Naive thymus-derived CD4-positive, alpha-beta T cell (primary cell): ENCODE measurements at regions of chr22 and their contacts with region 1.

Region 1: GRCh38 chr22:39236321-39237317 is 8.2 kb downstream of the PDGFB start:
- DNase-seq: peak in 7 of 9 donors; percentile 27 to 55 (median 49)
- ATAC-seq: peak; percentile 52
- H3K4me3 ChIP-seq: peak overlapping the region; percentile 14
- H3K4me3 Mint-ChIP-seq: peak overlapping the region; percentile 67 to 84 (median 79)
- H3K27ac ChIP-seq: no peak overlapping the region
- H3K27ac Mint-ChIP-seq: peak overlapping the region in 6 of 9 donors; percentile 31 to 89 (median 65)
- H3K4me1 ChIP-seq: peaks cover 54 to 66% of the 10 kb centered on the region in 2 donors
- H3K4me1 Mint-ChIP-seq: peaks cover 43 to 75% (median 67%) of the 10 kb centered on the region in 7 donors
- H3K27me3 ChIP-seq: peaks cover 0 to 8% of the 10 kb centered on the region in 2 donors
- H3K27me3 Mint-ChIP-seq: peaks cover 0 to 80% (median 38%) of the 10 kb centered on the region in 5 donors

Region 2: GRCh38 chr22:39152511-39153219 is 84.0 kb before region 1 on chr22 and contains the start of gene CBX7:
- CTCF ChIA-PET with region 1: no interaction called
- POLR2A ChIA-PET with region 1: interaction called, 18 read pairs
- intact Hi-C with region 1: no loop called
- DNase-seq: peak; percentile 91 to 98 (median 94)
- ATAC-seq: peak; percentile 93
- H3K4me3 ChIP-seq: peak within 1 kb of the TSS; percentile 95
- H3K4me3 Mint-ChIP-seq: peak within 1 kb of the TSS; percentile 83 to 99 (median 92)
- H3K27ac ChIP-seq: peak within 1 kb of the TSS; percentile 89
- H3K27ac Mint-ChIP-seq: peak within 1 kb of the TSS; percentile 87 to 96 (median 91)
- H3K4me1 ChIP-seq: peaks cover 31 to 46% of the 10 kb centered on the region in 2 donors
- H3K4me1 Mint-ChIP-seq: peaks cover 7 to 41% (median 35%) of the 10 kb centered on the region in 7 donors
- H3K27me3 ChIP-seq: no peaks in the 10 kb centered on the region
- H3K27me3 Mint-ChIP-seq: peaks cover 0 to 41% (median 0%) of the 10 kb centered on the region in 5 donors
- total RNA-seq, gene CBX7: 14.2 to 164 (median 76.9) TPM

Region 3: GRCh38 chr22:39193861-39194497 is 42.6 kb before region 1 on chr22:
- CTCF ChIA-PET with region 1: no interaction called
- POLR2A ChIA-PET with region 1: no interaction called
- intact Hi-C with region 1: loop called in 1 of 2 experiments (anchors 5 kb)
- DNase-seq: no peak
- ATAC-seq: no peak
- H3K4me3 ChIP-seq: no peak overlapping the region
- H3K4me3 Mint-ChIP-seq: no peak overlapping the region
- H3K27ac ChIP-seq: no peak overlapping the region
- H3K27ac Mint-ChIP-seq: peak overlapping the region in 1 of 9 donors; percentile 86
- H3K4me1 ChIP-seq: no peaks in the 10 kb centered on the region
- H3K4me1 Mint-ChIP-seq: peaks cover 0 to 9% (median 6%) of the 10 kb centered on the region in 7 donors
- H3K27me3 ChIP-seq: no peaks in the 10 kb centered on the region
- H3K27me3 Mint-ChIP-seq: peaks cover 0 to 41% (median 0%) of the 10 kb centered on the region in 5 donors

Region 4: DNA sequence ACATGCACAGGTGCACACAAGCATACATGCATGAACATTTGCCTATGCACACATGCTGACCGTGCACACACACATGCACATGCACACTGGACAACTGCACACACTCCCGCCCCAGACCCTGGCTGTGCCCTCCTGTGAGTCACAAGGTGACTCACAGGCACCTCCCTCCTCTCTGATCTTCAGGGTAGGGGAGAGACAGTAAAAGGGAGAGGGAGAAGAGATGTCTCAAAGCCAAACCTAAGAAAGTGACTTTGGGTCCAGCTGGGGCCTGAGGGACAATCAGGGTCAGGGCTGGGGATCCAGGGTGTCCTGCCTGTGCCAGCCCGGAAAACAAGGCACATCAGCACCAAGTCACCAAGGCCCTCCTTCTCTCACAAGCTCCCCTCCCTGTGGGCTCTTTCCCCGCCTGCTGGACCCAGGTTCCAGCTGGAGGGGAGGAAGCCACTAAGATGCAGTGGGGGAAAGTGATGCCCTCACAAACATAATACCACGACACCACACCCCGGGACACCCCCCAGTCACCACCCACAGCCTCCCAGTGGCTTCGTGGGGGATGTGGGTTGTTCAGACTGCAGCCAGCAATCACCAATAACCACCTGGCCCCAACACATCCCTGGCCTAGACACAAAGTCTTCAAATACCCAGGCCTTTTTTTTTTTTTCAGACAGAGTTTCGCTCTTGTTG is 31.1 kb before region 1 on chr22:
- CTCF ChIA-PET with region 1: no interaction called
- POLR2A ChIA-PET with region 1: interaction called, 11 read pairs
- intact Hi-C with region 1: loop called in 1 of 2 experiments (anchors 5 kb)
- DNase-seq: no peak
- ATAC-seq: peak; percentile 83
- H3K4me3 ChIP-seq: no peak overlapping the region
- H3K4me3 Mint-ChIP-seq: peak overlapping the region in 2 of 10 donors; percentile 12 to 41
- H3K27ac ChIP-seq: no peak overlapping the region
- H3K27ac Mint-ChIP-seq: peak overlapping the region in 2 of 9 donors; percentile 32 to 51
- H3K4me1 ChIP-seq: peaks cover 0 to 17% of the 10 kb centered on the region in 2 donors
- H3K4me1 Mint-ChIP-seq: peaks cover 5 to 29% (median 18%) of the 10 kb centered on the region in 7 donors
- H3K27me3 ChIP-seq: no peaks in the 10 kb centered on the region
- H3K27me3 Mint-ChIP-seq: peaks cover 0 to 22% (median 0%) of the 10 kb centered on the region in 5 donors

Region 5: DNA sequence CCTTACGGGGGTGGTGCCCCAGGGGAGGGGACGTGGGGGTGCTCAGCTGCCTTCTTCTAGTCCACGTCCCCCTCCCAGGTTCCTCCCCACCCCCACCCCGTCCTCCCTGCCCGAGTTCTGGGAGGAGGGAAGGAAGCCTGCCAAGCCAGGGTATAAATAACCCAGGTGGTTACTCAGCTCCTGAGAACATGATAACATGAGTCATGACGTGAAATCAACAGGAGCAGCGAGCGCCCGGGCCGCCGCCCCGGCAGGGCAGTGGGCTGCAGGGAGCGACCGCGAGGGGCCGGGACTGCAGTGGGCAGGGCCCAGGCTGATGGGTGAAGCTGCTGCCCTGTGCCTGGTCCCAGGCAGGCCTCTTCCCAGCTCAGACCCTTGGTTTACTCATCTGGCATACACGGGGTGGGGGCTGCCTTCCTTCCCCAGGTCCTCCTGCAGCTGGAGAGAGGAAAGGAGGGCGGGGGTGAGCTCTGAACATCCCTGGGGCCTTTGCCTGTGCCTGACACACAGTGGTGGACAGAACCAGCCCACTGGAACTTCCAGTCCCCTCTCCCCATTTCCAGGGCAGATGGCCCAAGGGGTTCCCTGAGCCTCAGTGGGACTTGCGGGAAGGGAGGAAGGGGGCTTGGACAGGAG is 16.9 kb after region 1 on chr22:
- CTCF ChIA-PET with region 1: interaction called, 3 read pairs
- POLR2A ChIA-PET with region 1: interaction called, 39 read pairs
- intact Hi-C with region 1: no loop called
- DNase-seq: peak in 1 of 9 donors; percentile 65
- ATAC-seq: peak; percentile 43
- H3K4me3 ChIP-seq: no peak overlapping the region
- H3K4me3 Mint-ChIP-seq: peak overlapping the region in 1 of 10 donors; percentile 40
- H3K27ac ChIP-seq: no peak overlapping the region
- H3K27ac Mint-ChIP-seq: peak overlapping the region in 1 of 9 donors; percentile 42
- H3K4me1 ChIP-seq: peaks cover 12 to 26% of the 10 kb centered on the region in 2 donors
- H3K4me1 Mint-ChIP-seq: peaks cover 0 to 28% (median 10%) of the 10 kb centered on the region in 7 donors
- H3K27me3 ChIP-seq: no peaks in the 10 kb centered on the region
- H3K27me3 Mint-ChIP-seq: peaks cover 0 to 48% (median 22%) of the 10 kb centered on the region in 5 donors

Region 6: GRCh38 chr22:39306581-39307361 is 70.2 kb after region 1 on chr22:
- CTCF ChIA-PET with region 1: interaction called, 6 read pairs
- POLR2A ChIA-PET with region 1: interaction called, 3 read pairs
- intact Hi-C with region 1: loop called in 1 of 2 experiments (anchors 5 kb)
- DNase-seq: peak in 5 of 9 donors; percentile 31 to 60 (median 42)
- ATAC-seq: peak; percentile 51
- H3K4me3 ChIP-seq: no peak overlapping the region
- H3K4me3 Mint-ChIP-seq: no peak overlapping the region
- H3K27ac ChIP-seq: no peak overlapping the region
- H3K27ac Mint-ChIP-seq: peak overlapping the region in 3 of 9 donors; percentile 32 to 37 (median 33)
- H3K4me1 ChIP-seq: peaks cover 0 to 5% of the 10 kb centered on the region in 2 donors
- H3K4me1 Mint-ChIP-seq: peaks cover 0 to 13% (median 7%) of the 10 kb centered on the region in 7 donors
- H3K27me3 ChIP-seq: no peaks in the 10 kb centered on the region
- H3K27me3 Mint-ChIP-seq: no peaks in the 10 kb centered on the region

Region 7: GRCh38 chr22:39462443-39463221 is 226.0 kb after region 1 on chr22:
- CTCF ChIA-PET with region 1: no interaction called
- POLR2A ChIA-PET with region 1: no interaction called
- intact Hi-C with region 1: no loop called
- DNase-seq: no peak
- ATAC-seq: peak; percentile 26
- H3K4me3 ChIP-seq: no peak overlapping the region
- H3K4me3 Mint-ChIP-seq: peak overlapping the region in 1 of 10 donors; percentile 32
- H3K27ac ChIP-seq: no peak overlapping the region
- H3K27ac Mint-ChIP-seq: peak overlapping the region in 1 of 9 donors; percentile 1
- H3K4me1 ChIP-seq: peaks cover 0 to 9% of the 10 kb centered on the region in 2 donors
- H3K4me1 Mint-ChIP-seq: peaks cover 6 to 17% (median 10%) of the 10 kb centered on the region in 7 donors
- H3K27me3 ChIP-seq: peaks cover 0 to 11% of the 10 kb centered on the region in 2 donors
- H3K27me3 Mint-ChIP-seq: peaks cover 16 to 29% (median 25%) of the 10 kb centered on the region in 5 donors